H1 (cell line): ENCODE measurements at regions of chr20 and their contacts with region 1.

Region 1: DNA sequence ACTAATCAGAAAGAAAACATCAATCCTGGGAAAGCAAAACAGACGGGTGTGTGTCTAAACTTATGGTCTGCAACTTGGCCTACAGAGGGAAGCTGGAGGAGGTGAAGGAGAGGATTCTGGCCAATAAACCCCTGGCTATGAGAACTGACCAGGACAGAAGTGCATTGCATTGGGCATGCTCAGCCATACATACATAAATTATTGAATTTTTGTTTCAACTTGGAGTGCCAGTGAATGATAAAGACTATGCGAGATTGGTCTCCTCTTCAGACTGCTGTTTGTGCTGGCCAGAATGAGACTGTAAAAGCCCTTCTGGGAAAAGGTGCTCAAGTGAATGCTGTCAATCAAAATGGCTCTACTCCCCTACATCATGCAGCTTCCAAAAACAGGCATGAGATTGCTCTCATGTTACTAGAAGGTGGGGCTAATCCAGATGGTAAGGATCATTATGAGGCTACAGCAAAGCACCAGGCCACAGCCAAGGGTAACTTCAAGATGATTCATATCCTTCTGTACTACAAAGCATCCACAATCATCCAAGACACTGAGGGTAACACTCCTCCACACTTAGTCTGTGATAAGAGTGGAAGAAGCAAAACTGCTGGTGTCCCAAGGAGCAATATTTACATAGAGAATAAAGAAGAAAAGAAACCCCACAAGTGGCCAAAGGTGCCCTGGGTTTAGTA is 17.4 kb downstream of the ADNP start:
- DNase-seq: no peak
- H3K4me3 ChIP-seq: no peak overlapping the region
- H3K27ac ChIP-seq: no peak overlapping the region
- H3K4me1 ChIP-seq: peaks cover 0 to 12% (median 2%) of the 10 kb centered on the region in 4 experiments; a peak in 3 of 7 replicates
- H3K27me3 ChIP-seq: no peaks in the 10 kb centered on the region
- CTCF ChIP-seq: no peak
- EP300 ChIP-seq: no peak
- POLR2A ChIP-seq: no peak
- RAD21 ChIP-seq: no peak

Region 2: GRCh38 chr20:50898475-50898874 is 15.4 kb before region 1 on chr20:
- CTCF ChIA-PET with region 1: interaction called, 5 read pairs
- POLR2A ChIA-PET with region 1: interaction called, 16 read pairs
- DNase-seq: no peak
- H3K4me3 ChIP-seq: no peak overlapping the region
- H3K27ac ChIP-seq: no peak overlapping the region
- H3K4me1 ChIP-seq: no peaks in the 10 kb centered on the region
- H3K27me3 ChIP-seq: no peaks in the 10 kb centered on the region
- CTCF ChIP-seq: no peak
- EP300 ChIP-seq: no peak
- POLR2A ChIP-seq: no peak
- RAD21 ChIP-seq: no peak